PC-9 (cell line): ENCODE measurements at regions of chr4 and their contacts with region 1.

Region 1: GRCh38 chr4:143335979-143336780 is 496 bp upstream of the GAB1 start:
- DNase-seq: peak; percentile 62 to 90
- H3K4me3 ChIP-seq: peak overlapping the region; percentile 88
- H3K27ac ChIP-seq: peak overlapping the region; percentile 78
- H3K4me1 ChIP-seq: no peaks in the 10 kb centered on the region
- H3K27me3 ChIP-seq: no peaks in the 10 kb centered on the region
- CTCF ChIP-seq: no peak

Region 2: DNA sequence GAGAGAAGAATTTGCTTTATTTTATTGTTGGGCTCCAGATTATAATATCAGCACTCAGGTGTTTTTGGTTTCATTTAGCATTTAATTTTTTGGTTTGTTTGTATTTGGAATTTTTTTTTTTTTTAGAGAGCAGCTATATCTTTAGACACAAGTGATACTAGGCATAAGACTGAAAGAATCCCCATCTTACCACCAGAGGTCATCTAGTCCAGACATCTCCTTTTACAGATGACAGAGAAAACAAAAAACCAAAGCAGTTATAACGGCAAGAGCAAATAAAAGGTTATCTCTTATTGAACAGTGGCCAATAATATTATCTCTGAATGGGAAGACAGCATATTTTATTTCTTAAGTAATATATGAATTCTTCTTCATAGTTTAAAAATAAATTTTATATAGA is 128.6 kb before region 1 on chr4:
- CTCF ChIA-PET with region 1: no interaction called
- POLR2A ChIA-PET with region 1: no interaction called
- intact Hi-C with region 1: loop called (anchors 2 kb)
- DNase-seq: no peak
- H3K4me3 ChIP-seq: no peak overlapping the region
- H3K27ac ChIP-seq: no peak overlapping the region
- H3K4me1 ChIP-seq: no peaks in the 10 kb centered on the region
- H3K27me3 ChIP-seq: no peaks in the 10 kb centered on the region
- CTCF ChIP-seq: peak; percentile 26; the same call in 1 of the 2 replicates

Region 3: DNA sequence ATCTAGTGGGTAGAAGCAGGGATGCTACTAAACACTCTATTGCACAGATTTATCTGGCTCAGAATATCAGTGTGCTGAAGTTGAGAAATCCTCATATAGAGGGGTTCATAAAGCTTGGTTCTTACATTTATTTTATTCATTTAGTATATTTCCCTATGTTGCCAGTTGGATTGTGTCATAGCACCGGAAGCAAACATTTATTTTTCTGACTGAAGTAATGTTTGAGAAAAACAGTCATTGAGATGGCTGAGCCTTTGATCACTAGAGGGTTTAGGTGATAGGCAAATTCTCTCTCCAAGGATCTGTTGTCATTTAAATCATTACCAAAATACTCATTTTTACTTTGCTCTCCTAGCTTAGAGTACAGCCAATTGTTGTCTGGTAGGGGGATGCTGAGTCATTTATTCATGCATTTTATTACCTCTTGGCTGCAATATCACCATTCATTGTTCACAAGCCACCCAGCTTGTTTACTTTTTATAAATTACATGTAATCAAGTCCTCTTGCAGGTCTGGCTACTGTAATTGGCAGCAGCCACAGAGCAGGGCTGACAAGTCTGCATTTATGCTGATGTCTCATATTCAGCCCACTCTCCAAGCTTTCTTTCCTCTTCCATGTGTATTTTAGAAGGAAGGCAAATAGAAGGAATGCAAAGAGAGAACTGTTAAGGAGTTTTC is 15.7 kb after region 1 on chr4:
- CTCF ChIA-PET with region 1: no interaction called
- POLR2A ChIA-PET with region 1: interaction called, 9 read pairs
- intact Hi-C with region 1: loop called (anchors 2 kb)
- DNase-seq: peak; percentile 22 to 75
- H3K4me3 ChIP-seq: no peak overlapping the region
- H3K27ac ChIP-seq: peak overlapping the region; percentile 68
- H3K4me1 ChIP-seq: peaks cover 46% of the 10 kb centered on the region
- H3K27me3 ChIP-seq: no peaks in the 10 kb centered on the region
- CTCF ChIP-seq: no peak

Region 4: DNA sequence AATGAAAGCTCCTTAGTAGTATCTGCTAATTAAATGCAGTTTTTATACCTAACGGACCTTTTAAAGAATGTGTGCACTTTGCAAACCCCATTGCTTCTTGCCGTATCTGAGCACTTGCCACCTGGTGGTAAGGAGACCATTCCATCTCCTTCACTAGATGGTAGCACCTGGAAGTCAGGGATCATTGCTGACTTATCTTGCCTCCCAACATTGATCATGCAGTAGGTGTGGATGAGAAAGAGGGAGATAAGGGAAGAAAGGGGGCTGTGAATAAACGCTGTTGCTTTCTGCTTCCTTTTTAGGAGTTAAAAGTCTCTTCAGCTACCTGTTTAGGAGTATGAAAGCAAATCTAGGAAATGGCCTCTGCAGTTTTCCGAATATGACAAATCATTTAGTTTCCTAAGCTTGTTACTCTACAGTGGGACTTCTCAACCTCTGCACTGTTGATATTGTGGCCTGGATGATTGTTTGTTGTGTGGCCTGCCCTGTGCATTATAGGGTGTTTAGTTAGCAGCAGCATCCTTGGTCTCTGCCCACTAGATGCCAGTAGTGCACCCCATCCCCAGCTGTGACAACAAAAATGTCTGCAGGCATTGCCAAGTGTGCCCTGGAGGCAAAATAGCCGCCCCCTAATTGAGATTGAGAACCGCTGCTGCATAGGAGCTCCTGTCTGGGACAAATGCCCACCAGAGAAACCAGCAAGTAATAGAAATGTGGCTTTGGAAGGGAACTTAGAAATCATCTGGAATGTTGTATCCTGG is 39.3 kb after region 1 on chr4:
- CTCF ChIA-PET with region 1: no interaction called
- POLR2A ChIA-PET with region 1: no interaction called
- intact Hi-C with region 1: loop called (anchors 5 kb)
- DNase-seq: no peak
- H3K4me3 ChIP-seq: no peak overlapping the region
- H3K27ac ChIP-seq: no peak overlapping the region
- H3K4me1 ChIP-seq: no peaks in the 10 kb centered on the region
- H3K27me3 ChIP-seq: no peaks in the 10 kb centered on the region
- CTCF ChIP-seq: 0 out of 2 replicates have a peak, but pooled peaks have one; percentile 25

Region 5: DNA sequence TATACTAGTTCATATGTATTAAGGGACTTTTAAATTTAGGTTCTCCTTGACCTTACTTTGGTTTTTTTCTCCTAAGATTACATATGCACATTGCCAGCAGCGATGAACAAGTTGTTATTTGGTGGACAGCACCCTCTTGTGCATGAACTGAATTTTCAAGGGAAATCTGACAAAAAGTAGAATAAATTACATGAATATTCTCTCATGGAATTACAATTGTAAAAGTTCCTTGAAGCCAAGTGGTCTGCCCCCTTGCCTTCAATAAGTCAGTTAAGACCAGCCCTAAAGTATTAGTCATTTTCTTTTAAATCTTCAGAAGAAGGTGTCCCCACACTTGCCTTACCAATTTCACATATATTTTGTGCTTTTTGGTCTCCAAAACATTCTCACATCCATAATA is 146.7 kb after region 1 on chr4:
- CTCF ChIA-PET with region 1: no interaction called
- POLR2A ChIA-PET with region 1: no interaction called
- intact Hi-C with region 1: loop called (anchors 5 kb)
- DNase-seq: peak; percentile 16 to 40
- H3K4me3 ChIP-seq: no peak overlapping the region
- H3K27ac ChIP-seq: no peak overlapping the region
- H3K4me1 ChIP-seq: no peaks in the 10 kb centered on the region
- H3K27me3 ChIP-seq: no peaks in the 10 kb centered on the region
- CTCF ChIP-seq: peak; percentile 69